Activated CD8-positive, alpha-beta T cell treated with anti-CD3 and anti-CD28 coated beads, Interleukin-2, amount 10 ng/mL, durations not matched to agents 7 days and 5 days (primary cell): ENCODE measurements at regions of chr18 and their contacts with region 1.

Region 1: GRCh38 chr18:44758861-44759631 is 78.4 kb downstream of the SETBP1 start:
- DNase-seq: peak; percentile 35
- ATAC-seq: peak; percentile 88
- H3K4me3 Mint-ChIP-seq: peak overlapping the region; percentile 66
- H3K27ac Mint-ChIP-seq: peak overlapping the region; percentile 97
- H3K4me1 Mint-ChIP-seq: peaks cover 21% of the 10 kb centered on the region
- H3K27me3 Mint-ChIP-seq: peaks cover 3% of the 10 kb centered on the region

Region 2: DNA sequence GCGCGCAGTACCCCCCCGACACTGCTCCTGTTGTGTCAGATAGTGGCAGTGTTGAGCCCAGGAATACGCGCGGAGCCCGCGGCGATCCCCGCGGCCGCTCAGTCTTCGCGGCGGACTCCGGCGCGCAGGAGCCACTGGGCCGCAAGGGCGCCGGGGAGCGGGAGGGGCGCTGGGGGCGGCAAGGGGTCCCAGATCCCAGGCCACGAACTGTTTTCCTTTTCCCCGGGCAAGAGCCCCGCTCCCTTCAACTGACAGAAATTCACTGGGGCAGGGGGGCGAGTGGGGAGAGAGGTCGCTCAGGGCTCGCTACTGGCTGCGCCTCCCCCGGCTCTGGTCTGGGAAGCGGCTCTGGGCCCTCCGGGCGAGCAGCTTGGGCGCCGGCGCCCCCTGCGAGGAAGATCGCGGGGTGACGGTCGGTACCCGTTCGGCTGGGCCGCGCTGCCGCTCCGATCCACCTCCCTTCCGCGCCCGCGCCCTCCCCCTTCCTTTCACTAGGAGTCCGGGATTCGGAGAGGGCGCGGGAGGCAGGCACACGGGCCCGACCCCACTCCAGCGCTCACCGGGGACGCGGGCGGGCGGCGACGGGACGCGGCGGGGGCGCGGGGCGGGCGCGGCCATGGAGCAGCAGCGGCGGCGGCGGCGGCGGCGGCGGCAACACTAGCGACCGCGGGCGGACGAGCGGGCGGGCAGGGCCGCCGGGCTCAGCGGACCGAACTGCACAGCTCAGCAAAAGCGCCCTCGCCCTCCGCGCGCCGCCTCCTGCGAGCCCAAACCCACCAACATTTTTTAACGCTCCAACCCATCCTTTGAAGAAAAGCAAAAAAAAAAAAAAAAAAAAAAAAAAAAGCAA is 79.8 kb before region 1 on chr18:
- CTCF ChIA-PET with region 1: interaction called, 11 read pairs
- POLR2A ChIA-PET with region 1: interaction called, 4 read pairs
- DNase-seq: peak; percentile 84
- ATAC-seq: peak; percentile 93
- H3K4me3 Mint-ChIP-seq: peak overlapping the region; percentile 38
- H3K27ac Mint-ChIP-seq: no peak overlapping the region
- H3K4me1 Mint-ChIP-seq: peaks cover 12% of the 10 kb centered on the region
- H3K27me3 Mint-ChIP-seq: peaks cover 27% of the 10 kb centered on the region

Region 3: GRCh38 chr18:44725300-44726096 is 33.5 kb before region 1 on chr18:
- CTCF ChIA-PET with region 1: interaction called, 5 read pairs
- POLR2A ChIA-PET with region 1: interaction called, 17 read pairs
- DNase-seq: peak; percentile 81
- ATAC-seq: peak; percentile 88
- H3K4me3 Mint-ChIP-seq: peak overlapping the region; percentile 43
- H3K27ac Mint-ChIP-seq: peak overlapping the region; percentile 69
- H3K4me1 Mint-ChIP-seq: peaks cover 76% of the 10 kb centered on the region
- H3K27me3 Mint-ChIP-seq: peaks cover 14% of the 10 kb centered on the region

Region 4: DNA sequence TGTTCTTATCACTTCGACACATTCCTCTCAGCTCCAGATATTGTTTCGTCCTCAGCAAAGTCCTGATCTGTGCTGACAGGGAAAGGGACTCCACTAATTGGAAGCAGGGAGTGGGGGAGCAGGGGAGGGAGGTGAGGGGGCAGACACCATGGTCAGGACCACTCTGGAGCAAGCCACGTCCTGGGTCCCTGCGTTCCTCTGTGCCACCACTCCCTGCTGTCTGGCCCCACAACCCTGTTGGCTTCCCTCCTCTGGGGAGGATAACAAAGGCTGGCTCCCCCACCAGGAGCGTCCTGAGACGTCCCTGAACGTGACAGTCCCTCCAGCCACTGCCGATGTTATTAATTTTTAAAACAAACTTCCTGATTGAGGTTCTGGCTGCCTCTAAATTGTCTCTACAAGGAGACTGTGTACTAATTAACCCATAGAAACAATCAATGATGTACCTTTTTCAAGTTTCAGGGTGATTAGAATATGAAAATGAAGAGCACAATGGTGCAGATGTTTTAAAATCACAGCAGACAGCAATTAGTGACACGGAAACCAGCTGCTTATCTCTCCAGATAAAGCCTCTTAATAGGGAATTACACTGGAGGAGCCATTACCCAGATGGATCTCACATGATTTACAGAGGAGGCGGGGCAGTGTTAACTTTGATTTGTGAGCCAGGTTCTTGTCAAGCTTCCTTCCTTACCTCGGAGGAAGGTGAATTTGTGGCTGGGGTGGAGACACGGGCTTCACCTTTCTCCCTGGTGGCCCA is 179.1 kb after region 1 on chr18:
- CTCF ChIA-PET with region 1: no interaction called
- POLR2A ChIA-PET with region 1: no interaction called
- DNase-seq: no peak
- ATAC-seq: no peak
- H3K4me3 Mint-ChIP-seq: no peak overlapping the region
- H3K27ac Mint-ChIP-seq: no peak overlapping the region
- H3K4me1 Mint-ChIP-seq: peaks cover under 1% of the 10 kb centered on the region
- H3K27me3 Mint-ChIP-seq: peaks cover 6% of the 10 kb centered on the region